Sciatic nerve (tissue), 2 donors: ENCODE measurements at regions of chr11 and their contacts with region 1.

Region 1: DNA sequence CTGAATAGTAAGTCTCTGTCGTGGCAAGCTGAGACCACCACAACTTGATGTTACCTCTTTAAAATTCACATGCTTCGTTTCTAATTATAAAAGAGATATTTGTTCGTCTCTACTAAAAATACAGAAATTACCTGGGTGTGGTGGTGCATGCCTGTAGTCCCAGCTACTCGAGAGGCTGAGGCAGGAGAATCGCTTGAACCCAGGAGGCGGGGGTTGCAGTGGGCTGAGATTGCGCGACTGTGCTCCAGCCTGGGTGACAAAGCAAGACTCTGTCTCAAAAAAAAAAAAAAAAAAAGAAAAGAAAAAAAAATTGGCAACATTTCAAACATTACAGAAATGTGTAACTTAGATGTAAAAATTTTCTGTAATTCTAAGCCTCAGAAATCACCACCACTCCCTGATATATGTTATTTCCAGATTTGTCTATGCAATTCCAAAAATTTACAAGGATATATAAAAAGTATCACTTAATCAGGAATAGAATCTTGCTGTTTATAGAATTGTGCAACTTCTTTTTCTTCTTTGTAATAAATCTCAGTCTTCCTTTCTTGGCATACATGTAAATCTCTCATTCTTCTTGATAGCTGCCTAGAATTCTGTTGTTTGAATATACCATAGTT is 37.2 kb downstream of the C11orf96 start:
- DNase-seq: no peak
- ATAC-seq: no peak

Region 2: DNA sequence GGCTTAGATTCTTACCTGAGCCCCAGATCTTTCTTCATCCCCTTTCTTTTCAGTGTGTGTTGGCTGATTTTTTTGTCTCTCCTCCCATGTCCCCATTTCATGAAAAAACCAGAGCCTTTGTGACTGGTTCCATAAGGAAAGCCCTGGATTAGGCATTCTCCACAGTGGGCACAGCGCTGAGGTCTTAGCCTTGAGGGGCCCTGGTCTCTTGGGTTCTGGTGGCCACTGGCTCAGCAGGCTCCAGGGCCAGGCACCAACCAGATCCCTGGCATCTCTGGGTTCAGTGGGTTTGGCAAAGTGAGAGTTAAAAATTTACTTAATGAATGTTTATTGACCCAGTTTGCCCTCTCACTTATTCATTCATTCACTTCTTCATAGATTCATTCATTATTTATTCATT is 18.6 kb after region 1 on chr11:
- intact Hi-C with region 1: loop called (anchors 2 kb)
- DNase-seq: no peak
- ATAC-seq: no peak